A549 (cell line): ENCODE measurements at regions of chr4 and their contacts with region 1.

Region 1: DNA sequence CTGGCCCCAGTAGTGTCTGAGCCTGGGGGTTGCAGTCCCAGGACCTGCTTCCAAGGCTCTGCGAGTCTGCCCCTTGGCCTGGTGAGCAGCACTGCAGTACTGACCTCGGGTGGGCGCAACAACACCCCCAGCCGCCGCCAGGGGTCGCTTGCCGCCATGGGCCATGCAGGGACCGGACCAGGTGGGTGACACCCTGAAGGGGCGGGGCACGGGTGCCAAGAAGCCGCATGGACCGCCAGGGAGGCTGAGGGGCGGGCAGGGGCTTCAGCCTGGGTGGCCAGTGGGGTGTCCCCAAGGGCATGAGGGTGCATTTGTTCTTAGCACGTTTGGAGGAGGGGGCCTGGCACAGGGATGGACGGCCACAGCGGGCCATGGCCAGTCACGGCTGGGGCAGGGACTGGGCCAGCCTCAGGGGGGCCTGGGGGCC is 25.0 kb downstream of the TACC3 start:
- DNase-seq: peak; percentile 73 to 77
- ATAC-seq: peak; percentile 65 to 88
- H3K4me3 ChIP-seq: no peak overlapping the region
- H3K27ac ChIP-seq: no peak overlapping the region
- H3K4me1 ChIP-seq: no peaks in the 10 kb centered on the region; the same call in 2 of the 3 replicates
- CTCF ChIP-seq: peak; percentile 54
- EP300 ChIP-seq: no peak
- POLR2A ChIP-seq: no peak
- RAD21 ChIP-seq: peak; percentile 52 to 56

Region 2: GRCh38 chr4:1417522-1418390 is 328.5 kb before region 1 on chr4:
- CTCF ChIA-PET with region 1: no interaction called
- POLR2A ChIA-PET with region 1: no interaction called
- DNase-seq: no peak
- ATAC-seq: peak; percentile 58 to 72; a peak in 4 of 6 replicates
- H3K4me3 ChIP-seq: no peak overlapping the region
- H3K27ac ChIP-seq: no peak overlapping the region
- H3K4me1 ChIP-seq: no peaks in the 10 kb centered on the region
- CTCF ChIP-seq: no peak
- EP300 ChIP-seq: no peak
- POLR2A ChIP-seq: no peak
- RAD21 ChIP-seq: no peak

Region 3: GRCh38 chr4:1712216-1713002 is 33.9 kb before region 1 on chr4 and contains the start of gene SLBP:
- CTCF ChIA-PET with region 1: no interaction called
- POLR2A ChIA-PET with region 1: no interaction called
- DNase-seq: peak; percentile 92 to 97
- ATAC-seq: peak; percentile 86 to 92
- H3K4me3 ChIP-seq: peak within 1 kb of the TSS; percentile 85
- H3K27ac ChIP-seq: peak within 1 kb of the TSS; percentile 99 to 100
- H3K4me1 ChIP-seq: peaks cover 40% of the 10 kb centered on the region
- CTCF ChIP-seq: no peak
- EP300 ChIP-seq: no peak
- POLR2A ChIP-seq: peak; percentile 87
- RAD21 ChIP-seq: no peak
- polyA plus RNA-seq, gene SLBP: 66.7 and 89.9 TPM in 2 replicates

Region 4: DNA sequence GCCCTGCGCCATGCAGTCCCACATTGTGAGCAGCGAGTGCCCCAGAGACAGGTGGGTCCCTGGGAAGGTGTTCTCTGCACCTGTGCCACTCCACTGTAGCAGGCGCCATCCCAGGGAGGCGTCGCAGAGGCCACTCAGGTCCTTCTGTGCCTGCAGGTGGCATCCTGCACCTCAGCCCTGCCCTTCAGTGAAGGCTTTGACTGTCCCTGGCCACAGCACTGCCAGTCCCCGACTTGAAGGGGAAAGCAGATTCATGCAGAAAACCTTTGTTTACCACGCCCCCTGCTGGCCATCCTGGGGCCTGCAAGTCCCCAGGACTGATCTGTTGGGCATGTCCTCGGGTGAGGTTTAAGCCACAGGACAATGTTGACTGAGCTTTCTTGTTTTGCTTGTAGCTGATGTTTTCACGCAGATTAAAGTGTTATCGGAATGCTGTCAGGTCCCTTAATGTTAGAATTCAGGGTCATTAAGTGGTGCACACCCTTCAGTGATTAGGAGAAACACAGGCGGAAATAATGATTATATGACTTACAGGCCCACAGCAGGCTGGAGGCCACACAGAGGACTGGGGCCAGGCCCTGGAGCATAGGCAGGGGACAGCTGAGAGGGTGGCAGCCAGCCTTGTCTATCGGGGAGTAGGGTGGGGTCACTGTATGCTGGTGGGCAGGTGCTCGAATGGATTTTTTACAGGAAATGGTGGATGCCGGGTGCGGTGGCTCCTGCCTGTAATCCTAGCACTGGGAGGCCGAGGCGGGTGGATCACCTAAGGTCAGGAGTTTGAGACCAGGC is 19.9 kb before region 1 on chr4:
- CTCF ChIA-PET with region 1: interaction called, 24 read pairs
- POLR2A ChIA-PET with region 1: no interaction called
- DNase-seq: peak; percentile 69 to 84
- ATAC-seq: peak; percentile 58 to 66
- H3K4me3 ChIP-seq: no peak overlapping the region
- H3K27ac ChIP-seq: peak overlapping the region; percentile 84 to 92
- H3K4me1 ChIP-seq: peaks cover 52% of the 10 kb centered on the region
- CTCF ChIP-seq: peak; percentile 82
- EP300 ChIP-seq: no peak
- POLR2A ChIP-seq: no peak
- RAD21 ChIP-seq: peak; percentile 42 to 43; a peak in 4 of 5 replicates

Region 5: DNA sequence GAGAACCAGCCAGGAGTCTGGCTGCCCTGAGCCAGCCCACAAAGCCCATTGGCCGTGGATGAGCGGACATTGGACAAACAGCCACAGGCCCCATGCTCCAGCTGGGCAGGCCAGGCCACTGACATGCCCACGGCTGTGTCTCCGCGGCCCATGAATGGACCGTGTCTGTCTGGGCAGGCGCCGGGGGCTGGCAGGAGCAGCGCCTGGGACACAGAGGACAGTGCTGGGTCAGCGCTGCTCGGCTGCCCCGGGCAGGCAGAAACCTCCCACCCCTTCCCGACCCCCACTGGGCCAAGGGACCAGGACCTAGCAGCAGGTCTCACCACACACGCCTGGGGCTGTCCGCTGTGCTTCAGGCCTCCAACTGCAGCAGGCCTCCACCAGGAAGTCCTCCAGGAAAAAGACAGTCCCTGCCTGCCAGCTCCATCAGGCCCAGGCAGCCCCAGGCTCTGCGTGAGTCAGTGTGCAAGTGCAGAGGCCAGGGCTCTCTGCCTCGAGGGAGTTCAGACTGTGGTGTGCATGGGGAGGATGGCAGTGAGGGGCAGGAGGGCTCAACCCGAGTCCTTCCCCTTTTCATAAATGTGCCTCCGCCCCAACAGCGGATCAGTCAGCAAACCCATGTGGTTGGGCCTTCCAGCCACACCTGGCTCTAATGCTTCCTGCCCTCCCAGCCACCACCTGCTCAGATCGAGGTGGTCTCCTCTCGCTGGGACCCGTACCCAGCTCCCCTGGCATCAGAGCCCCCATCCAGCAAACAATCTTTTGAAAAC is 29.6 kb after region 1 on chr4:
- CTCF ChIA-PET with region 1: interaction called, 10 read pairs
- POLR2A ChIA-PET with region 1: no interaction called
- DNase-seq: peak in 1 of 2 experiments; percentile 48
- ATAC-seq: peak; percentile 40 to 42; a peak in 5 of 6 replicates
- H3K4me3 ChIP-seq: no peak overlapping the region
- H3K27ac ChIP-seq: peak overlapping the region in 1 of 2 experiments; percentile 83; a peak in 3 of 6 replicates
- H3K4me1 ChIP-seq: peaks cover 25% of the 10 kb centered on the region
- CTCF ChIP-seq: no peak
- EP300 ChIP-seq: no peak
- POLR2A ChIP-seq: no peak
- RAD21 ChIP-seq: no peak

Region 6: GRCh38 chr4:1792832-1793495 is 46.7 kb after region 1 on chr4 and contains the start of gene FGFR3:
- CTCF ChIA-PET with region 1: interaction called, 24 read pairs
- POLR2A ChIA-PET with region 1: no interaction called
- DNase-seq: peak in 1 of 2 experiments; percentile 54
- ATAC-seq: peak; percentile 26 to 63
- H3K4me3 ChIP-seq: peak within 1 kb of the TSS; percentile 62
- H3K27ac ChIP-seq: peak within 1 kb of the TSS; percentile 66 to 91
- H3K4me1 ChIP-seq: peaks cover 18% of the 10 kb centered on the region
- CTCF ChIP-seq: no peak
- EP300 ChIP-seq: no peak
- POLR2A ChIP-seq: peak; percentile 88
- RAD21 ChIP-seq: no peak
- polyA plus RNA-seq, gene FGFR3: 1.6 and 1.9 TPM in 2 replicates

Region 7: DNA sequence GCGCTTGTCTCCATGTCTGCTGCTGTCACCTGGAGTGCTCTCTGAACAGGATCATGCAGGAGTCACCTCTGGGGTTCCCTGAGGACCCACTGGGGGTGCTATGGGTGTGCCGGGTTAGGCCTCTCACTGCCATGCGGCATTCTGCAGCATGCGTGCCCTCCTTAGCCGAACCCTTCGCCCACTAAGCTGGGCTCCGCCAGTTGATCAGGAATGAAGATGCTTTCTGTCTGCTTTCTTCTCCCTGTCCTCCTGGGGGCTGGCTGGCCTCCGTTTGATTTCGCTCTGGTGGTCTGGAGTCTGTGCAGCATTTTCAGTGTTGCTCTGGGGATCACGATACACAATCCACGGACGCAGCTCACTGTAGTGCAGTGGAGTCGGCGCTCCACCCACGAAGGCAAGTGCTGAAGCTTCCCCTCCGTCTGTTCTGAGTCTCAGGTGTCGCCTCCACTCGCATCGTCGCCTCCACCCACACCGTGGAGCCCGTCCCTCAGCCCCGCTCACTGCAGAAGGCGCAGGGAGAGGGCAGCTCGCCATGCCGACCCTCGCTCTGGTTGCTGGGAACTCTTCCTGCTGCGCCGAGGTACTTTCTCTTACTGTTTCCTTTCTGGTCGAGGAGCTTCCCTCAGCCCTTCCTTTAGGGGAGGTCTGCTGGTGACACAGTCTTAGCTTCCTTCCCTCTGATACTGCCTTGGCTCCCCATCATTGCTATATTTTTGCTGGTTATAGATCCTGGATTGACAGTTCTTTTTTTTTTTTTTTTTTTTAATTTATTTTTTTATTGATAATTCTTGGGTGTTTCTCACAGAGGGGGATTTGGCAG is 80.5 kb after region 1 on chr4:
- CTCF ChIA-PET with region 1: no interaction called
- POLR2A ChIA-PET with region 1: no interaction called
- DNase-seq: no peak
- ATAC-seq: peak in 1 of 2 experiments; percentile 32; a peak in 2 of 6 replicates
- H3K4me3 ChIP-seq: no peak overlapping the region
- H3K27ac ChIP-seq: no peak overlapping the region
- H3K4me1 ChIP-seq: no peaks in the 10 kb centered on the region
- CTCF ChIP-seq: no peak
- EP300 ChIP-seq: no peak
- POLR2A ChIP-seq: no peak
- RAD21 ChIP-seq: no peak

Region 8: DNA sequence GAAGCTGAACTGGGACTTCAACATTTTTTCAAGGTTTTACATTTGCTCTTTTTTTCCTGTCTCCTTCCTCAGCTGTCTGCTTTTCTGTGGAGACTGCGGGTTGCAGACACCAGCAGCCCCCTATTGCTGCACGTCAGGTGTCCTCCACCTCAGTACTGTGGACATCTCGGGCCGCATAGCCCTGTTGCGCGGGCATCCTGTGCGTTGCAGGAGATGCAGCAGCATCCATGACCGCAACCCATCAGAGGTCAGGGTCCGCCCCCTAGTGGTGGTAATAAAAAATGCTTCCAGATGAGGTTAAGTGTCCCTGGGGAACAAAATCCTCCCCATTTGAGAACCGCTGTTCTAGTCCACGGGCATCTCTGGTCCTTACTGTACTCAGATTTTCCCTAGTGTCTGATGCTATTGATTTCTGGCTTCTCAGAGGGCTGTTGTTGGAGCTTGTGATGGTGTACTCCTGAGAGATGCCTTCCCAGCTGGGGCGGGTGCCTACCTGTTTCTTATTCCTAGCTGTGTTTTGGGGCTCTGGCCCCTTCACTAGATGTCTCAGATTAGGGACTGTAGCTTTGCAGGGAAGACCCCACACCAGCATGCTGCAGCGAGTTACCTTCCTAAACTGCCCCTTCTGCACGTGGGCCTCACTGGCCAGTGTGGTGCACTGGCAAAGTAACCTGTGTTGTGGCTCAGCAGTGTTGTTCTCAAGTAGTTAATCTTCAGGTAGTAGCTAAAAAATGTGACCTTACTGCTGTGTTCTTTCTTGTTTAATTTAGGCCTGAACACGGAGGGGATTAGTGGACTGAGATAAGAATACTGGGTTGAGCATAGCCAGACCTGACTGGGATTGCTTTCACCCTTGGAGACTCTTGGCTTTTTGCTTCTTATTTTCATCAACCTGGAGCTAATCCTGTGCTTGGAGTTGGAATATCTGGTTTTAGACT is 153.1 kb after region 1 on chr4:
- CTCF ChIA-PET with region 1: interaction called, 13 read pairs
- POLR2A ChIA-PET with region 1: no interaction called
- DNase-seq: peak; percentile 76 to 84
- ATAC-seq: peak; percentile 97
- H3K4me3 ChIP-seq: no peak overlapping the region
- H3K27ac ChIP-seq: no peak overlapping the region
- H3K4me1 ChIP-seq: peaks cover 8% of the 10 kb centered on the region; the same call in 2 of the 3 replicates
- CTCF ChIP-seq: peak; percentile 69
- EP300 ChIP-seq: no peak
- POLR2A ChIP-seq: no peak
- RAD21 ChIP-seq: peak; percentile 70